Lower leg skin (tissue), 4 donors: ENCODE measurements at regions of chr12 and their contacts with region 1.

Region 1: GRCh38 chr12:92570056-92570753 is 132.6 kb upstream of the PLEKHG7 start:
- DNase-seq: peak in 1 of 2 donors; percentile 86
- H3K4me3 ChIP-seq: no peak overlapping the region
- CTCF ChIP-seq: peak in 1 of 3 donors; percentile 53
- POLR2A ChIP-seq: no peak

Region 2: DNA sequence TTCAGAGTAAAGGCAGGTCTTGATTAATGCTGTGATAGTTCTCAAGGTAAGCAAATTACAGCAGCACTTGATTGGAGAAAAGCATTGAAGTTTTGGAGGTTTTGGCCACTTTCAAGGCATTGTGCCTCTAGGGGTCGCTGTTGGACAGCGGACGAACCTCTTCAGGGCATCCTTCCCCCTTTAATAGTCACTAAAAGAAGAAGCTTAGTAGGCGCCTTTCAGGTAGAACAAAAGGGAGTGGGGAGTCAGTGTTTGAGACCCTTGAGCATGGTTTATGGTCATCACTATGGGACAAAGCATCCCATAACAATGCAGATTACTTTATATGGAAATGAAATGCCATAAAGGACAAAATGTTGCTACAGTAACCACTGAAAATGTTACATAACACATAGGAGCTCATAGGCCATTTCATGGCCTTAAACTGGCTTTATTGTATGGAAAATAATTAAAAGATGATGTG is 1188.1 kb before region 1 on chr12:
- intact Hi-C with region 1: loop called (anchors 10 kb)
- DNase-seq: peak; percentile 86 to 95
- H3K4me3 ChIP-seq: no peak overlapping the region
- CTCF ChIP-seq: peak in 1 of 3 donors; percentile 63
- POLR2A ChIP-seq: no peak

Region 3: GRCh38 chr12:92304371-92305055 is 265.7 kb before region 1 on chr12:
- intact Hi-C with region 1: no loop called
- DNase-seq: no peak
- H3K4me3 ChIP-seq: no peak overlapping the region
- CTCF ChIP-seq: no peak
- POLR2A ChIP-seq: no peak

Region 4: GRCh38 chr12:92608151-92609091 is 38.2 kb after region 1 on chr12:
- intact Hi-C with region 1: no loop called
- DNase-seq: no peak
- H3K4me3 ChIP-seq: no peak overlapping the region
- CTCF ChIP-seq: no peak
- POLR2A ChIP-seq: no peak

Region 5: GRCh38 chr12:92955997-92956663 is 385.9 kb after region 1 on chr12:
- intact Hi-C with region 1: no loop called
- DNase-seq: no peak
- H3K4me3 ChIP-seq: no peak overlapping the region
- CTCF ChIP-seq: no peak
- POLR2A ChIP-seq: no peak

Region 6: GRCh38 chr12:93008044-93008778 is 438.0 kb after region 1 on chr12:
- intact Hi-C with region 1: no loop called
- DNase-seq: no peak
- H3K4me3 ChIP-seq: no peak overlapping the region
- CTCF ChIP-seq: no peak
- POLR2A ChIP-seq: no peak